MCF 10A (cell line): ENCODE measurements at regions of chr7 and their contacts with region 1.

Region 1: DNA sequence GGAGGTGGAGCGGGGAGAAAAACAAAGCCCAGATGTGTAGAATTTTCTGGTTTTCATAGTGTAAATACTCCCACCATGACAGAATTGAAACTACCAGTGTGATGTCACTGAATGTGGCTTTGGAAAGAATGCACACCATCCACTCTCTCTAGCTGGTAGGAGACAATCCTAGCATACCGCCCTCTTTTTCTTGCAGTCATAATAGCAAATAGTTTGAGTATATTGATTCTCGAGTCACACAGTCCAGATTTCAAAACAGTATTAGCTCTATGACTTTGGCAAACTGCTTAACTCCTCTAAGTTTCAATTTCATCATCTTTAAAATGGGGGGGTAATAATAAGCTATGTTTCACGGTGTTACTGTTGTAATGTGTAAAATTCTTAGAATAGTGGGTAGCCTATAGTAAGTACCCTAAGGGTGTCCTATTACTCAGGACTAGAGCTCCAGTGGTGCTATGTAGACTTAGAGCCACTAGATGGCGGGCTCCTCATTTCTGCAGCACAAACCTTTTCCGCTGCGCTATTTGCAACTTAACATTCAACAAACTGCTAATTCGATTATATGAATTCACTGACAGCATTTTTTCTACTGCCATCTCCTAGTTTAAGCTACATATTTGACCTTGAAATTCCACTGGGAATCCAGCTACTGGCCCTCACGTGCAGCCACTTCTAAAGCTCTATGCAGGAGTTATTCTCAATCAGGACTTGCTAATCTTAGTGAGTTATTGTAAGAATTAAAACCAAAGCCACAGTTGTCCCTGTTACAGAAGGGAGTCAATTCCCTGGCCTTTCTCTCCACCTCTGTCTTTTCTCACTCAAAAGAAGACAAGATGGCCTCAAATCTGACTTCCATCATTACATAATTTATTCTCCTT is 18.7 kb downstream of the TAS2R40 start:
- DNase-seq: peak; percentile 82
- H3K4me3 Mint-ChIP-seq: peak overlapping the region; percentile 7
- H3K27ac Mint-ChIP-seq: peak overlapping the region; percentile 39
- H3K4me1 Mint-ChIP-seq: peaks cover 21% of the 10 kb centered on the region
- H3K27me3 Mint-ChIP-seq: peaks cover 21% of the 10 kb centered on the region
- CTCF ChIP-seq: peak; percentile 92

Region 2: GRCh38 chr7:142908921-142909890 is 331.3 kb before region 1 on chr7:
- CTCF ChIA-PET with region 1: no interaction called
- POLR2A ChIA-PET with region 1: no interaction called
- intact Hi-C with region 1: no loop called
- DNase-seq: peak; percentile 46
- H3K4me3 Mint-ChIP-seq: no peak overlapping the region
- H3K27ac Mint-ChIP-seq: no peak overlapping the region
- H3K4me1 Mint-ChIP-seq: no peaks in the 10 kb centered on the region
- H3K27me3 Mint-ChIP-seq: peaks cover 73% of the 10 kb centered on the region
- CTCF ChIP-seq: peak; percentile 29

Region 3: GRCh38 chr7:143042159-143042789 is 198.3 kb before region 1 on chr7:
- CTCF ChIA-PET with region 1: no interaction called
- POLR2A ChIA-PET with region 1: no interaction called
- intact Hi-C with region 1: no loop called
- DNase-seq: no peak
- H3K4me3 Mint-ChIP-seq: no peak overlapping the region
- H3K27ac Mint-ChIP-seq: no peak overlapping the region
- H3K4me1 Mint-ChIP-seq: no peaks in the 10 kb centered on the region
- H3K27me3 Mint-ChIP-seq: peaks cover 15% of the 10 kb centered on the region
- CTCF ChIP-seq: no peak

Region 4: DNA sequence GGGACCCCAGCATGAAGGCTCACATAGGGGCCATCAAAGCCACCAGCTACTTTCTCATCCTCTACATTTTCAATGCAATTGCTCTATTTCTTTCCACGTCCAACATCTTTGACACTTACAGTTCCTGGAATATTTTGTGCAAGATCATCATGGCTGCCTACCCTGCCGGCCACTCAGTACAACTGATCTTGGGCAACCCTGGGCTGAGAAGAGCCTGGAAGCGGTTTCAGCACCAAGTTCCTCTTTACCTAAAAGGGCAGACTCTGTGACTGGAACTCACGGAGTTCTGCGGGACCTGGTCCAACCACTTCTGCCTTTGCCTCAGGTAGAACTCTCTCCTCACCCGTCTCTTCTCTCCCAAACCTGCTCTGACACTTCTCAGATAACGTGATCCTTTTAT is 17.7 kb before region 1 on chr7:
- CTCF ChIA-PET with region 1: interaction called, 31 read pairs
- POLR2A ChIA-PET with region 1: no interaction called
- intact Hi-C with region 1: no loop called
- DNase-seq: no peak
- H3K4me3 Mint-ChIP-seq: no peak overlapping the region
- H3K27ac Mint-ChIP-seq: no peak overlapping the region
- H3K4me1 Mint-ChIP-seq: no peaks in the 10 kb centered on the region
- H3K27me3 Mint-ChIP-seq: peaks cover 76% of the 10 kb centered on the region
- CTCF ChIP-seq: no peak

Region 5: GRCh38 chr7:143271240-143271639 is 30.7 kb after region 1 on chr7:
- CTCF ChIA-PET with region 1: no interaction called
- POLR2A ChIA-PET with region 1: no interaction called
- intact Hi-C with region 1: no loop called
- DNase-seq: no peak
- H3K4me3 Mint-ChIP-seq: no peak overlapping the region
- H3K27ac Mint-ChIP-seq: no peak overlapping the region
- H3K4me1 Mint-ChIP-seq: no peaks in the 10 kb centered on the region
- H3K27me3 Mint-ChIP-seq: no peaks in the 10 kb centered on the region
- CTCF ChIP-seq: no peak

Region 6: GRCh38 chr7:143287935-143288826 is 47.7 kb after region 1 on chr7 and contains the start of gene CASP2:
- CTCF ChIA-PET with region 1: interaction called, 35 read pairs
- POLR2A ChIA-PET with region 1: interaction called, 5 read pairs
- intact Hi-C with region 1: no loop called
- DNase-seq: peak; percentile 97
- H3K4me3 Mint-ChIP-seq: peak within 1 kb of the TSS; percentile 98
- H3K27ac Mint-ChIP-seq: peak within 1 kb of the TSS; percentile 68
- H3K4me1 Mint-ChIP-seq: peaks cover 42% of the 10 kb centered on the region
- H3K27me3 Mint-ChIP-seq: no peaks in the 10 kb centered on the region
- CTCF ChIP-seq: no peak
- total RNA-seq, gene CASP2: 15.1 and 17.4 TPM in 2 replicates

Region 7: GRCh38 chr7:143321734-143322133 is 81.2 kb after region 1 on chr7:
- CTCF ChIA-PET with region 1: interaction called, 12 read pairs
- POLR2A ChIA-PET with region 1: no interaction called
- intact Hi-C with region 1: no loop called
- DNase-seq: peak; percentile 52
- H3K4me3 Mint-ChIP-seq: no peak overlapping the region
- H3K27ac Mint-ChIP-seq: no peak overlapping the region
- H3K4me1 Mint-ChIP-seq: peaks cover 26% of the 10 kb centered on the region
- H3K27me3 Mint-ChIP-seq: no peaks in the 10 kb centered on the region
- CTCF ChIP-seq: peak; percentile 34

Region 8: GRCh38 chr7:143380255-143380645 is 139.7 kb after region 1 on chr7:
- CTCF ChIA-PET with region 1: interaction called, 24 read pairs
- POLR2A ChIA-PET with region 1: interaction called, 10 read pairs
- intact Hi-C with region 1: loop called (anchors 2 kb)
- DNase-seq: peak; percentile 80
- H3K4me3 Mint-ChIP-seq: peak overlapping the region; percentile 77
- H3K27ac Mint-ChIP-seq: peak overlapping the region; percentile 88
- H3K4me1 Mint-ChIP-seq: peaks cover 32% of the 10 kb centered on the region
- H3K27me3 Mint-ChIP-seq: no peaks in the 10 kb centered on the region
- CTCF ChIP-seq: peak; percentile 71

Region 9: DNA sequence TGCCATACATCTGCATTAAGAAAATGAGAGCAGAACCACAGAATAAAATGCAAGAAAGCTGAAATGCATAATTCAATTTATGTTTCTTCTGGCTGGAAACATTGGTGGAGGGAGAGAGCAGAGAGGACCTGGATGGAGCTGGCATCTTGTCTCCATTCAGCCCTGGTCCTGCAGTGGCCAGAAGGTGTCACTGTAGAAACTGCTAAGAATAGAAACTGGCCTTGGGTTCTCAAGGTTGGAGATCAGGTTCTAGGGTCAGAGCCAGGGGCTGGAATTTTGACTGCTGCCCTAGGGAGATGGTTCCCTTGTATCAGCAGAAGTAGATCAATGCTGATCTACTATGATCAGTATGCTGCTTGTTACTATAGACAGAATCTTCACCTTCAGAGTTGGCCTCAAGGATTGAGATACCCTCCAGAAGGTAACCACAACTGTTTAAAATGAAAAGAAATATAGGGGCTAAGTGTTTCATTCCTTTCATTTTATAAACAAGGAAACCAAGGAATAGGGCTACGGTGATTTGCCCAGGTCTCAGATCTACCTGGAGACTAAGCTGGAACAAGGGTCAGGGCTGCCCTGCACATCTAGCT is 250.3 kb after region 1 on chr7:
- CTCF ChIA-PET with region 1: interaction called, 13 read pairs
- POLR2A ChIA-PET with region 1: no interaction called
- intact Hi-C with region 1: no loop called
- DNase-seq: peak; percentile 54
- H3K4me3 Mint-ChIP-seq: no peak overlapping the region
- H3K27ac Mint-ChIP-seq: no peak overlapping the region
- H3K4me1 Mint-ChIP-seq: peaks cover 12% of the 10 kb centered on the region
- H3K27me3 Mint-ChIP-seq: no peaks in the 10 kb centered on the region
- CTCF ChIP-seq: peak; percentile 42